ENCODE measurements at regions of chr17 and their contacts with region 1.

Region 1: GRCh38 chr17:58517734-58518609 is 3.5 kb upstream of the MTMR4 start:
- DNase-seq: peak; percentile 92 to 100 (median 100)
- ATAC-seq: peak; percentile 89
- H3K4me3 ChIP-seq: peak overlapping the region; percentile 99
- H3K4me3 Mint-ChIP-seq: peak overlapping the region; percentile 92 to 98 (median 96)
- H3K27ac ChIP-seq: peak overlapping the region; percentile 84
- H3K27ac Mint-ChIP-seq: peak overlapping the region; percentile 82 to 97 (median 95)
- H3K4me1 ChIP-seq: peaks cover 20 to 28% of the 10 kb centered on the region in 2 donors
- H3K4me1 Mint-ChIP-seq: peaks cover 30 to 49% (median 46%) of the 10 kb centered on the region in 7 donors
- H3K27me3 ChIP-seq: no peaks in the 10 kb centered on the region
- H3K27me3 Mint-ChIP-seq: peaks cover 0 to 5% (median 0%) of the 10 kb centered on the region in 5 donors

Region 2: GRCh38 chr17:56592487-56593085 is 1925.4 kb before region 1 on chr17:
- CTCF ChIA-PET with region 1: no interaction called
- POLR2A ChIA-PET with region 1: no interaction called
- intact Hi-C with region 1: loop called in 1 of 2 experiments (anchors 10 kb)
- DNase-seq: peak in 8 of 9 donors; percentile 65 to 87 (median 81)
- ATAC-seq: peak; percentile 82
- H3K4me3 ChIP-seq: peak overlapping the region; percentile 71
- H3K4me3 Mint-ChIP-seq: peak overlapping the region; percentile 76 to 94 (median 90)
- H3K27ac ChIP-seq: peak overlapping the region; percentile 71
- H3K27ac Mint-ChIP-seq: peak overlapping the region in 8 of 9 donors; percentile 56 to 99 (median 84)
- H3K4me1 ChIP-seq: peaks cover under 1 to 12% of the 10 kb centered on the region in 2 donors
- H3K4me1 Mint-ChIP-seq: peaks cover 5 to 22% (median 14%) of the 10 kb centered on the region in 7 donors
- H3K27me3 ChIP-seq: peaks cover 0 to 5% of the 10 kb centered on the region in 2 donors
- H3K27me3 Mint-ChIP-seq: peaks cover 0 to 61% (median 27%) of the 10 kb centered on the region in 5 donors

Region 3: GRCh38 chr17:58082870-58083490 is 435.0 kb before region 1 on chr17 and contains the start of gene DYNLL2:
- CTCF ChIA-PET with region 1: no interaction called
- POLR2A ChIA-PET with region 1: no interaction called
- intact Hi-C with region 1: loop called in 1 of 2 experiments (anchors 5 kb)
- DNase-seq: peak; percentile 74 to 88 (median 87)
- ATAC-seq: peak; percentile 91
- H3K4me3 ChIP-seq: peak within 1 kb of the TSS; percentile 88
- H3K4me3 Mint-ChIP-seq: peak within 1 kb of the TSS; percentile 88 to 95 (median 92)
- H3K27ac ChIP-seq: peak within 1 kb of the TSS; percentile 94
- H3K27ac Mint-ChIP-seq: peak within 1 kb of the TSS; percentile 81 to 95 (median 90)
- H3K4me1 ChIP-seq: peaks cover 23 to 34% of the 10 kb centered on the region in 2 donors
- H3K4me1 Mint-ChIP-seq: peaks cover 26 to 40% (median 34%) of the 10 kb centered on the region in 7 donors
- H3K27me3 ChIP-seq: no peaks in the 10 kb centered on the region
- H3K27me3 Mint-ChIP-seq: peaks cover 0 to 31% (median 0%) of the 10 kb centered on the region in 5 donors
- total RNA-seq, gene DYNLL2: 30.1 to 39.1 (median 35.1) TPM

Region 4: DNA sequence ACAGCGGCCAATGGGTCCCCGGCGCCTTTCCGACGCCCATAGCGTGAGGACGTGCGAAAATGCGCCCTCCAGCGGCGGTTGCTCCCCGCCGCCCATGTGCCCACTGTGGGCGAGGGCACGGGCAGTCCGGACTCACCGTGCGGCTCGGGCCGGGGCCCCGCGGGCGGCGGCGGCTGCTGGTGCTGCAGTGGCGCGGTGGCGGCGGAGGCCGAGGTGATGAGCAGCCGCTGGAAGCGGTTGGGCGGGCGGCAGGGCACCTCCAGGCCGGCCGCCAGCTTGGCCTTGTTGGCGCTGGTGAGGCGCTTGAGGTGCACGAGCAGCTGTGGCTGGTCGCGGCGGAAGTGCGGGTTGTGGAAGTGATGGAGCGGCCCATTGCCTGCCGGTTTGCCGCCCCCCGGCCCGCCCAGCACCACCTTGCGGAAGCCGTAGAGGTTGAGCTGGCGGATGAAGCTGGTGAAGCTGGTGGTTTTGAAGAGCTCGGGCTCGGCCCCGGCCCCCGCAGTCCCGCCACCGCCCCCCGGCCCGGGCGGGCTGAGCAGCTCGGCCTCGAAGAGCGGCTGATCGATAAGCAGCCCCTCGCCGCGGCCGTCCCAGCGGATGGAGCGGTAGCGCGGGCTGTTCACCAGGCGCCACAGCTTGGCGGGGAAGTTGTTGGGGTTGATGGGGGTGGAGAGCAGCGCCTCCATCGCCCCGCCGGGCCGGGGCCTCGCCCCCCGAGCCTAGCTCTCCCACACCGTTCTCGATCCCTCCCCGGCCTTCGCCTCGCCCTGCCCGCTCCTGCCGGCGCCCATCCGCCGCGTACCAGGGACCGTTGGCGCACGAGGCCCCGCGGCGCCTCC is 30.2 kb before region 1 on chr17 and contains the start of gene HSF5:
- CTCF ChIA-PET with region 1: interaction called, 5 read pairs
- POLR2A ChIA-PET with region 1: interaction called, 14 read pairs
- intact Hi-C with region 1: loop called in 1 of 2 experiments (anchors 1 kb)
- DNase-seq: peak; percentile 60 to 85 (median 82)
- ATAC-seq: peak; percentile 94
- H3K4me3 ChIP-seq: peak within 1 kb of the TSS; percentile 60
- H3K4me3 Mint-ChIP-seq: peak within 1 kb of the TSS; percentile 50 to 79 (median 69)
- H3K27ac ChIP-seq: peak within 1 kb of the TSS; percentile 60
- H3K27ac Mint-ChIP-seq: peak within 1 kb of the TSS in 7 of 9 donors; percentile 45 to 83 (median 57)
- H3K4me1 ChIP-seq: peaks cover 5 to 10% of the 10 kb centered on the region in 2 donors
- H3K4me1 Mint-ChIP-seq: peaks cover 0 to 35% (median 16%) of the 10 kb centered on the region in 7 donors
- H3K27me3 ChIP-seq: no peaks in the 10 kb centered on the region
- H3K27me3 Mint-ChIP-seq: no peaks in the 10 kb centered on the region
- total RNA-seq, gene HSF5: 0.34 to 4.0 (median 3.1) TPM

Region 5: GRCh38 chr17:58692239-58693055 is 174.5 kb after region 1 on chr17 and contains the start of gene RAD51C:
- CTCF ChIA-PET with region 1: no interaction called
- POLR2A ChIA-PET with region 1: interaction called, 16 read pairs
- intact Hi-C with region 1: loop called (anchors 1 kb)
- DNase-seq: peak; percentile 66 to 86 (median 82)
- ATAC-seq: peak; percentile 99
- H3K4me3 ChIP-seq: peak within 1 kb of the TSS; percentile 75
- H3K4me3 Mint-ChIP-seq: peak within 1 kb of the TSS; percentile 85 to 99 (median 94)
- H3K27ac ChIP-seq: peak within 1 kb of the TSS; percentile 77
- H3K27ac Mint-ChIP-seq: peak within 1 kb of the TSS; percentile 87 to 96 (median 89)
- H3K4me1 ChIP-seq: peaks cover 12 to 17% of the 10 kb centered on the region in 2 donors
- H3K4me1 Mint-ChIP-seq: peaks cover 20 to 37% (median 31%) of the 10 kb centered on the region in 7 donors
- H3K27me3 ChIP-seq: no peaks in the 10 kb centered on the region
- H3K27me3 Mint-ChIP-seq: peaks cover 0 to 2% (median 0%) of the 10 kb centered on the region in 5 donors
- total RNA-seq, gene RAD51C: 11.4 to 52.6 (median 27.8) TPM

Region 6: DNA sequence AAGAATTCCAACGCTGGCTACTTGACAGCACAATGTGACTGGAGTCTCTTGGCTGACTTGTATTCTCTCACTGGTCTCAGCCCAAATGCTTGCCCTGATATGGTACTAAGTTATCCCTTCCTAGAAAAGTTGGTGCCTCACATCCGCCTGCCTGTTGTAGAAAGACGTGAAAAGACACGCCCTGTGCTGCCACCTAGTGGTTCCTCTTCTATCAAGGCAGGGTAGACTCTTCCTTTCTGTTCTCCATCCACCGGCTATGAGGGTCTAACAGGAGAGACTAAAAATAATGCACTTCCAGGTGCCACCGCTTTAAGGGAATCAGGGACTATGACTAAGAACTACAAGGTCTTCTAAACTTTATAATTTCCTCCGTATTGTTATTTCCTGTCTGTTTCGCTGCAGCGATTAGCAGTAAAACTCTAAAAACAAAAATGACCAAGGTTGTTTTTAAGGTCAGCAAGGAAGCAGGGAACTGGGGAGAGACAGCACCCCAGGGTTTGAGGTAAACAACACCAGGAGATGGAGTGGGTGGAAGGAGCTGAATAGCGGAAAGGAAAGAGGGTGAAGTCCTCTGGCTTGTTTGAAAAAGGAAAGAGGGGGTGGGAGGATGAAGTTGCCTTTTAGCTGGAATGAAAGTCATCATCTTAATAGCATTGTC is 922.9 kb after region 1 on chr17:
- CTCF ChIA-PET with region 1: no interaction called
- POLR2A ChIA-PET with region 1: no interaction called
- intact Hi-C with region 1: loop called in 1 of 2 experiments (anchors 5 kb)
- DNase-seq: peak; percentile 54 to 87 (median 80)
- ATAC-seq: peak; percentile 97
- H3K4me3 ChIP-seq: no peak overlapping the region
- H3K4me3 Mint-ChIP-seq: peak overlapping the region in 8 of 10 donors; percentile 9 to 72 (median 46)
- H3K27ac ChIP-seq: no peak overlapping the region
- H3K27ac Mint-ChIP-seq: peak overlapping the region in 7 of 9 donors; percentile 13 to 89 (median 55)
- H3K4me1 ChIP-seq: peaks cover 4 to 20% of the 10 kb centered on the region in 2 donors
- H3K4me1 Mint-ChIP-seq: peaks cover 0 to 50% (median 27%) of the 10 kb centered on the region in 7 donors
- H3K27me3 ChIP-seq: no peaks in the 10 kb centered on the region
- H3K27me3 Mint-ChIP-seq: peaks cover 0 to 7% (median 0%) of the 10 kb centered on the region in 5 donors

Region 7: DNA sequence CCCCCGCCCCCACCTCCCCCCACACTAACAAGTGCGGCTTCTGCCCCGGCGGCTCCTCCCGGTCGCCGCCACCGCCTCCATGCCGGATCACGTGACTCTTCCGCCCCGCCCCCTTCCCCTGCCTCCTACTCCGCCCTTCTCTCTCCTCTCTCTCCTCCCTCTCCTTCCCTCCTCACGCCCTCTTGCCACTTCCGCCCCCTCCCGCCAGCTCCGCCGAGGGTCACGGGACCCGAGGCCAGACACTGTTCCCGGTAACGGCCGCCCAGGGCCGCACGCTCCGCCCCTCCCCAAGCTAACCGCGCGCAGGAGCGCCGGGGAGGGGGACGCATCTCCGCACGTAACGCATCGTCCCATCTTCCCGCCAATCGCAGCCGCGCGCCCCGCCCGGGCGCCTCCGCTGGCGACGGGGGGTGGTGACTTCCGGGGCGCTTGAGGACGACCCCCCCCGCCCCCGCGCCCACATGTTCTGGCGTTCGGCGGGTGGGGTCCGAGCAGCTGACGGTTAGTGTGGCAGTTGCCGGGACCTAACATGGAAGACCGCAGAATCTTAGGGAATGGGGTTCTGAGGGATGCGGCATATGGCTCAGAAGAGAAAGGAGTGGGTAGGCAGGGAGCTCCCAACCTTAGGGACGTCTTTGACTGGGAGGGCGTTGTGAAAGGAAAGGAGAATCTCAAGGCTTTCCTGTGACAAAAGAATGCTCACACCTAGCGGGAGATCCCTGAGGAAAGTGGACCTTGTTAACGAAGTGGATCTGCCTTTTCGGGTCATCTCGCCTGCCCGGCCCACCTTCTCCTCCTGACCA is 1874.3 kb after region 1 on chr17 and contains the start of gene USP32:
- CTCF ChIA-PET with region 1: no interaction called
- POLR2A ChIA-PET with region 1: no interaction called
- intact Hi-C with region 1: loop called in 1 of 2 experiments (anchors 10 kb)
- DNase-seq: peak; percentile 94 to 98 (median 96)
- ATAC-seq: peak; percentile 95
- H3K4me3 ChIP-seq: peak within 1 kb of the TSS; percentile 97
- H3K4me3 Mint-ChIP-seq: peak within 1 kb of the TSS; percentile 93 to 99 (median 96)
- H3K27ac ChIP-seq: peak within 1 kb of the TSS; percentile 92
- H3K27ac Mint-ChIP-seq: peak within 1 kb of the TSS; percentile 92 to 99 (median 97)
- H3K4me1 ChIP-seq: peaks cover 5 to 18% of the 10 kb centered on the region in 2 donors
- H3K4me1 Mint-ChIP-seq: peaks cover 30 to 55% (median 41%) of the 10 kb centered on the region in 7 donors
- H3K27me3 ChIP-seq: no peaks in the 10 kb centered on the region
- H3K27me3 Mint-ChIP-seq: no peaks in the 10 kb centered on the region
- total RNA-seq, gene USP32: 31.6 to 58.1 (median 35.4) TPM

Measured in naive thymus-derived CD4-positive, alpha-beta T cell (primary cell).